GM12878 (cell line): ENCODE measurements at regions of chr5 and their contacts with region 1.

Region 1: DNA sequence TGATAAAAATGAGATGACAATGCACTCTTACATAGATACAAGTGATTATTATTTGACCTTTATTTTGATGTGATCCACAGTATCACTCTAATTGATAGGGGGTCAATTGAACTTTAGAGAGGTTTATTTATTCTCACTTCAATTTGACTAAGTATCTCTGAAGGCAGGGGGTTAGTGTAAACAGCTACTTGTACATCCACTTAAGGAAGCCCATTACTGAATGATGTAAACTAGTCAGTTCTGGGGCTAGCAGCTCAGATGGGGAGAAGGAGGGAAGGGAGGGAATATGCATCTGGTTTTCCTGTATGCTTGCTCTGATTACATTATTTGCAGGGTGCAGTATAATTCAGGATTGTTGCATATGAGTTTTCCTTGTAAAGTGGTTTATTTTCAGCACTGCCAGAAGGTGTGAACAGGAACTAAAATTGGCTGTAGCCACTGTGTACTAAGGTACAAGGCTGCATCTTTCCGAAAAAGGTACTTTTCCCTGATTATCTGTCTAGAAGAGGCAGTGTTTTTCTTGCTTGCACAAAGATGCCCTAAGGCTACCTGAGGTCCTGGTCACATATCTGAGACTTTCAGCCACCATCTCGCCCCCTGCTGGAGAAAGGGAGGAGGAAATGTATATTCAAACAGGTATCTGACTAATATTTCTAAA is 51.2 kb downstream of the MRPS27 start:
- DNase-seq: no peak
- ATAC-seq: peak; percentile 90
- H3K4me3 ChIP-seq: no peak overlapping the region
- H3K27ac ChIP-seq: no peak overlapping the region
- H3K4me1 ChIP-seq: no peaks in the 10 kb centered on the region
- H3K27me3 ChIP-seq: no peaks in the 10 kb centered on the region
- CTCF ChIP-seq: peak; percentile 65 to 68 (median 67); a peak in 5 of 6 replicates
- EP300 ChIP-seq: no peak
- POLR2A ChIP-seq: no peak
- RAD21 ChIP-seq: peak; percentile 73

Region 2: DNA sequence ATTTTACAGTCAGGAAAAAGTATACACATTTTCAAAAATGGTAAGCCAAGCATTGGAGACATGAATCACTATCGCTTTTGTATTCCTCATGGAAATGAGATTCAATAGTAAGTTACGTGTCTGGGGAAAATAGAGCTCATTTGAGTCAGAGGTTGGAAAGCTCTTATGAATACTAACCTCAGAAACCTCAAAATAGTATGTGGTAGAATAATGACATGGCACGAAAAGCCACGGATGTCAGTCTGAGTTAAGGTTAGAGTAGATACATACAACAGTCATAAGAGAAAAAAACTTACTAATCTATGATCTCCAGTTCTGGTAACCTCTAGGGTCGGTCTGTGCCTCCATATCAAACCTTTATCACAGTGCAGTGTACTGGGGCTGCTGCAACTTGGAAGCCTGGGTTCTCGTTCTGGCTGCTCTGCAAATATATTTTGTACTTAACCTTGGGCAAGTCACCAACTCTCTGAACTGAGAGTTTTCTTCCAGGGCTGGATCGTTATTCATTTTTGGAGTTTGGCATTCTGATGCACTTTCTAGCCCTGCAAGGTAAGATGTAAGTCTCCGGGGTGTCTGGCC is 129.8 kb before region 1 on chr5:
- CTCF ChIA-PET with region 1: interaction called, 5 read pairs
- POLR2A ChIA-PET with region 1: no interaction called
- RAD21 ChIA-PET with region 1: interaction called, 7 read pairs
- SMC1A ChIA-PET with region 1: interaction called, 4 read pairs
- in situ Hi-C with region 1: no loop called
- intact Hi-C with region 1: loop called (anchors 5 kb)
- DNase-seq: peak; percentile 15
- ATAC-seq: peak; percentile 74
- H3K4me3 ChIP-seq: no peak overlapping the region
- H3K27ac ChIP-seq: no peak overlapping the region
- H3K4me1 ChIP-seq: peaks cover 6% of the 10 kb centered on the region; the same call in 1 of the 2 replicates
- H3K27me3 ChIP-seq: peaks cover 0 to 2% of the 10 kb centered on the region in 2 experiments; a peak in 1 of 4 replicates
- CTCF ChIP-seq: no peak
- EP300 ChIP-seq: no peak
- POLR2A ChIP-seq: no peak
- RAD21 ChIP-seq: no peak

Region 3: GRCh38 chr5:72280581-72281170 is 11.8 kb after region 1 on chr5:
- CTCF ChIA-PET with region 1: interaction called, 59 read pairs
- POLR2A ChIA-PET with region 1: no interaction called
- RAD21 ChIA-PET with region 1: interaction called, 3 read pairs
- SMC1A ChIA-PET with region 1: interaction called, 10 read pairs
- in situ Hi-C with region 1: no loop called
- intact Hi-C with region 1: no loop called
- DNase-seq: no peak
- ATAC-seq: peak; percentile 57; the same call in 2 of the 3 replicates
- H3K4me3 ChIP-seq: no peak overlapping the region
- H3K27ac ChIP-seq: no peak overlapping the region
- H3K4me1 ChIP-seq: no peaks in the 10 kb centered on the region; the same call in 1 of the 2 replicates
- H3K27me3 ChIP-seq: no peaks in the 10 kb centered on the region
- CTCF ChIP-seq: peak; percentile 17 to 42 (median 37); a peak in 4 of 6 replicates
- EP300 ChIP-seq: no peak
- POLR2A ChIP-seq: no peak
- RAD21 ChIP-seq: peak; percentile 29; the same call in 1 of the 2 replicates

Region 4: GRCh38 chr5:72296256-72296655 is 27.4 kb after region 1 on chr5:
- CTCF ChIA-PET with region 1: interaction called, 11 read pairs
- POLR2A ChIA-PET with region 1: interaction called, 8 read pairs
- RAD21 ChIA-PET with region 1: no interaction called
- SMC1A ChIA-PET with region 1: interaction called, 6 read pairs
- in situ Hi-C with region 1: no loop called
- intact Hi-C with region 1: no loop called
- DNase-seq: no peak
- ATAC-seq: no peak
- H3K4me3 ChIP-seq: peak overlapping the region; percentile 8; the same call in 1 of the 2 replicates
- H3K27ac ChIP-seq: peak overlapping the region; percentile 60
- H3K4me1 ChIP-seq: peaks cover 48% of the 10 kb centered on the region
- H3K27me3 ChIP-seq: no peaks in the 10 kb centered on the region
- CTCF ChIP-seq: no peak
- EP300 ChIP-seq: no peak
- POLR2A ChIP-seq: no peak
- RAD21 ChIP-seq: no peak